Lower lobe of right lung (tissue), 2 donors: ENCODE measurements at regions of chr1 and their contacts with region 1.

Region 1: GRCh38 chr1:182781841-182782586 is 7.6 kb upstream of the NPL start:
- DNase-seq: peak; percentile 74
- ATAC-seq: peak; percentile 74 to 75
- H3K4me3 ChIP-seq: no peak overlapping the region
- H3K27ac ChIP-seq: no peak overlapping the region
- H3K4me1 ChIP-seq: peaks cover 11% of the 10 kb centered on the region
- H3K27me3 ChIP-seq: no peaks in the 10 kb centered on the region
- CTCF ChIP-seq: peak; percentile 73

Region 2: DNA sequence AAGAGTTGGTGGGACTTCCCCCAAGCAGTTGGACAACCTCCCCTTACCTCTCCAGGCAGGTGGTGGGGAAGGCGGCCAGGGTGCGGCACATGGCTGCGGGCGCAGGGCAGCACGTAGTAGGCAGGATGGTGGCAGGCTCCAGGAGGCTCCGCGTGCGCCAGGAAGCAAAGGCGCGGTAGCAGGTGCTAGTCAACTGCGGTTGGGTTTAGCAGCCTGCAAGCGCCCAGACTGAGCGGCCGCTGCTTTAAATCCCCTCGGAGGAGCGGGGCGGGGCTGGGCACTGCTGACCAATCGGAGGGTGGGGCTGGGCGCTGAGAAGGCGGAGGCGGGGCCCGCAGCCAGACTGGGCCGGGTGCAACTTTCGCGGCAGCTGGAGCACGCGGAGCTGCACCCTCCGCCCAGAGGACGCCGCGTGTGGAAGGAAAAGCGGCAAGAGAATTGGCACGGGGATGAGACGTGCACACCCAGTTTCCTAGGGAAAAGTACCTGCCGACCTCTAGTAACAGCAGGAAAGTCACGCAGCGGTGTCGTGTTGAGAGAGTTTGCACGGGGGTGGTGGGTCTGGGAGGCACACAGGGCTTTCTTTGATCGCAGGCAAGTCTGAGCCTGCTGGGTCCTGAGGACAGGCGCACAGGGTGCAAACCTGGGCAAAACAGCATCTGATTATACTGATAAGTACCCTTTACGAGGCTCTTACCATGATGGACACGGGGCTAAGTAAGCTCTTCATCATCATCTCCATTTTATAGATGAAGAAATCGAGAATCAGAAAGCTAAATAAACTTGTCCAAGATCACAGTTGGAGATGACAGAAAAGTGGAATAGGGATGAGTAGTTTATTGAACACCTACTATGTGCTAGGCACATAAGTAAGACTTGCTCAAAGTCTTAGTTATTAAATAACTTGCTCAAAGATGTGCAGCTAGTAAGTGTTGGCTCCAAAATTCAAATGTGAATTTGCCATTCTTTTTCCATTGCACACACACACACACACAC is 177.5 kb before region 1 on chr1 and contains the start of gene RGS16:
- intact Hi-C with region 1: loop called (anchors 5 kb)
- DNase-seq: peak; percentile 96
- ATAC-seq: peak; percentile 92 to 94
- H3K4me3 ChIP-seq: peak within 1 kb of the TSS; percentile 68
- H3K27ac ChIP-seq: peak within 1 kb of the TSS; percentile 82
- H3K4me1 ChIP-seq: peaks cover 36% of the 10 kb centered on the region
- H3K27me3 ChIP-seq: no peaks in the 10 kb centered on the region
- CTCF ChIP-seq: no peak
- total RNA-seq, gene RGS16: 14.6 TPM

Region 3: GRCh38 chr1:182955596-182956588 is 173.9 kb after region 1 on chr1:
- intact Hi-C with region 1: no loop called
- DNase-seq: no peak
- ATAC-seq: peak; percentile 21 to 42
- H3K4me3 ChIP-seq: no peak overlapping the region
- H3K27ac ChIP-seq: no peak overlapping the region
- H3K4me1 ChIP-seq: peaks cover 4% of the 10 kb centered on the region
- H3K27me3 ChIP-seq: peaks cover 22% of the 10 kb centered on the region
- CTCF ChIP-seq: no peak